ENCODE measurements at regions of chr22 and their contacts with region 1.

Region 1: GRCh38 chr22:45246060-45246985 is 5.6 kb upstream of the KIAA0930 start:
- DNase-seq: no peak
- ATAC-seq: peak; percentile 52
- H3K4me3 ChIP-seq: no peak overlapping the region
- H3K4me3 Mint-ChIP-seq: peak overlapping the region; percentile 41
- H3K27ac ChIP-seq: peak overlapping the region in 1 of 2 donors; percentile 56
- H3K27ac Mint-ChIP-seq: peak overlapping the region; percentile 81
- H3K4me1 ChIP-seq: peaks cover 14 to 45% of the 10 kb centered on the region in 2 donors
- H3K4me1 Mint-ChIP-seq: peaks cover 49% of the 10 kb centered on the region
- H3K27me3 ChIP-seq: no peaks in the 10 kb centered on the region
- H3K27me3 Mint-ChIP-seq: no peaks in the 10 kb centered on the region
- CTCF ChIP-seq: no peak

Region 2: GRCh38 chr22:45185718-45186514 is 60.4 kb before region 1 on chr22:
- CTCF ChIA-PET with region 1: no interaction called
- POLR2A ChIA-PET with region 1: no interaction called
- intact Hi-C with region 1: no loop called
- DNase-seq: no peak
- ATAC-seq: no peak
- H3K4me3 ChIP-seq: no peak overlapping the region
- H3K4me3 Mint-ChIP-seq: no peak overlapping the region
- H3K27ac ChIP-seq: no peak overlapping the region
- H3K27ac Mint-ChIP-seq: no peak overlapping the region
- H3K4me1 ChIP-seq: no peaks in the 10 kb centered on the region
- H3K4me1 Mint-ChIP-seq: no peaks in the 10 kb centered on the region
- H3K27me3 ChIP-seq: no peaks in the 10 kb centered on the region
- H3K27me3 Mint-ChIP-seq: no peaks in the 10 kb centered on the region
- CTCF ChIP-seq: no peak

Region 3: DNA sequence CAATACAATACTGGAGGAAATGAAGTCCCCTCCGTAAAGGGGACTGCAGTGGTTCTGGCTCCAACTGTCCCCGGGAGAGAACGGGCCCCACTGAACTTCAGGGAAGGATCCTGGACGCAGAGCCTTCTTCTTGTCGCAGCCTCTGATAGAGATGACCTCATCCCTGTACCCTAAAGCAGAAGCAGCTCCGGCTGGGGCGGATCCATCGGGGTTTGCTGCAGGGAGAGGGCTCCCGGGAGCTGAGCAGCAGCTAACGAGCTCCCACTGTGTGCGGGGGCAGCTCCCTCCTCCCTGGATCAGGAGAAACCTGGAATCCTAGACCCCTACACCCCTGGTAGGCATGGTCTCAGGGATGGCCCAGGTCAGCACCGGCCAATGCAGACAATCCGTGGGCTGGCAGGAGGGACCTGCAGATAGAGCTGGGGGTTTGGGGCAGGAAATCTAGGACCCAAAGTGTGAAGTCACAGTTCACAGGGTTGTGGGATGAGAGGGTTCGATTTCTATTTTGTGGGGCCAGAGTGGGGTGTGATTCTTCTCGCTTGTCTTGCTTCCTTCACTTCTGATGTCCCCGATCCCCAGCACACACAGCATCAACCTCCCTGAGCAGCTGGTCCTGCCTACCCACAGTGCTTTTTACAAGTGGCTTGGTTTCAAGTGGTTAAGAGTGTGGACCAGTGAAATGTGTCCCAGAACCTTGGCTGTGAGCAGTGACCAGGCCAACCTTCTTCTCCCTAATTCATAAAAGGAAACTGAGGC is 18.5 kb before region 1 on chr22:
- CTCF ChIA-PET with region 1: no interaction called
- POLR2A ChIA-PET with region 1: no interaction called
- intact Hi-C with region 1: no loop called
- DNase-seq: no peak
- ATAC-seq: no peak
- H3K4me3 ChIP-seq: no peak overlapping the region
- H3K4me3 Mint-ChIP-seq: no peak overlapping the region
- H3K27ac ChIP-seq: no peak overlapping the region
- H3K27ac Mint-ChIP-seq: no peak overlapping the region
- H3K4me1 ChIP-seq: peaks cover 6 to 16% of the 10 kb centered on the region in 2 donors
- H3K4me1 Mint-ChIP-seq: peaks cover 52% of the 10 kb centered on the region
- H3K27me3 ChIP-seq: no peaks in the 10 kb centered on the region
- H3K27me3 Mint-ChIP-seq: no peaks in the 10 kb centered on the region
- CTCF ChIP-seq: no peak

Region 4: DNA sequence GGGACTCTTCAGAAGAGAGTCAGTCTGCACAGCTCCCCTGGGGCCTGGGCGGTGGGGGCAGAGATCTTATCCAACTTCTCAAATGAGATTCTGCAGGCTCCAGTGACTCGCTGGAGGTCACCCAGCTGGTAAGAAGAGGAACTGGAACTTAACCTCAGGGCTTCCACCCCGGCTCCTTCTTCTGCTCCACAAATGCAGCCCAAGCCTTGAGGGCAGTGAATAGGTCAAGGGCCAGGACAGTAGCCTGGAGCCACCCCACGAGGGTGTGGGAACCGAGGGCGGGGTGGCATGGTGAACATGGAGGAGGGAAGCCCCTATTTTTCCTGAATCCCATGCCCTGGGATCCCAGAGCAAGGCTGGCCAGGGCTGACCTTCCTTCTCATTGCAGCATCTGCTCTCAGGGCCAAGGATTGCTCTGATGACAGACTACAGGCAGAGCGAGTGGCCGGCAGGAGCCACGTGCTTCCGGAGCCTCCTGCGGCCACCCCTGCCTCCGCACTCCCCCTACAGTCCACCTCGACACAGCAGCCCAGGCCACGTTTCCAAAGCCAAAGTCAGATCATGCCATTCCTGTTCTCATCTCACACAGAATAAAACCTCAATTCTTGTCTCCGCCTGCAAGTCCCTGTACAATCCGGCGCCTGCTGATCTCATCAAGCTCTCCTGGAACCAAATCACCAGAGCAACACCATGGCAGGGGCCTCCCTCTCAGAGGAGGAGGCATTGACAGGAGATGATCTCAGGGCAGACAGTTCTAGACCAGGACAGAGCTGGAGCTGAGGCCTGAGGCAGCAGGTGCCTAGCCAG is 17.3 kb after region 1 on chr22:
- CTCF ChIA-PET with region 1: interaction called, 15 read pairs
- POLR2A ChIA-PET with region 1: interaction called, 9 read pairs
- intact Hi-C with region 1: loop called (anchors 1 kb)
- DNase-seq: peak; percentile 92
- ATAC-seq: peak; percentile 97
- H3K4me3 ChIP-seq: peak overlapping the region in 2 of 5 experiments; percentile 16 to 56
- H3K4me3 Mint-ChIP-seq: peak overlapping the region; percentile 87
- H3K27ac ChIP-seq: no peak overlapping the region
- H3K27ac Mint-ChIP-seq: peak overlapping the region; percentile 78
- H3K4me1 ChIP-seq: peaks cover 39 to 47% of the 10 kb centered on the region in 2 donors
- H3K4me1 Mint-ChIP-seq: peaks cover 53% of the 10 kb centered on the region
- H3K27me3 ChIP-seq: peaks cover 0 to 3% (median under 1%) of the 10 kb centered on the region in 4 experiments
- H3K27me3 Mint-ChIP-seq: no peaks in the 10 kb centered on the region
- CTCF ChIP-seq: no peak

Region 5: DNA sequence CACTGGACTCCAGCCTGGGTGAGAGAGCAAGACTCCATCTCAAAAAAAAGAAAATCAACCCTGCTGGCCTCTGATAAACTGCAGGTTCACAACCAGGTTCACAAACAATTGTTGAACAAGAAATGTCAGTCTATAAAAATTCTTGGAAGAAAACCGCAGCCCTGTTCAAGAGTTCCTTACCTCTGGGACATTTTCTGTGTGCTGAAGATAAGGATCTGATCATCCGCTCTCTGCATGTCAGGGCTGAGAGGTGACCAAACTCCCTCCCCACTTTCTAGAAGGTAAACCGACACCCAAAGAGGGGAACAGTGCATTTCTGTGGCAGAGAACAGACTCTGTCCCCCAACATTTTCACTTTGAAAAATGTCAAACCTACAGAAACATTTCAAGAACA is 34.3 kb after region 1 on chr22:
- CTCF ChIA-PET with region 1: no interaction called
- POLR2A ChIA-PET with region 1: no interaction called
- intact Hi-C with region 1: no loop called
- DNase-seq: no peak
- ATAC-seq: no peak
- H3K4me3 ChIP-seq: no peak overlapping the region
- H3K4me3 Mint-ChIP-seq: no peak overlapping the region
- H3K27ac ChIP-seq: no peak overlapping the region
- H3K27ac Mint-ChIP-seq: no peak overlapping the region
- H3K4me1 ChIP-seq: peaks cover 20% of the 10 kb centered on the region in 2 donors
- H3K4me1 Mint-ChIP-seq: peaks cover 15% of the 10 kb centered on the region
- H3K27me3 ChIP-seq: peaks cover 0 to 5% (median 0%) of the 10 kb centered on the region in 4 experiments
- H3K27me3 Mint-ChIP-seq: no peaks in the 10 kb centered on the region
- CTCF ChIP-seq: no peak

Measured in B cell (primary cell).